ENCODE measurements at regions of chr13 and their contacts with region 1.

Region 1: DNA sequence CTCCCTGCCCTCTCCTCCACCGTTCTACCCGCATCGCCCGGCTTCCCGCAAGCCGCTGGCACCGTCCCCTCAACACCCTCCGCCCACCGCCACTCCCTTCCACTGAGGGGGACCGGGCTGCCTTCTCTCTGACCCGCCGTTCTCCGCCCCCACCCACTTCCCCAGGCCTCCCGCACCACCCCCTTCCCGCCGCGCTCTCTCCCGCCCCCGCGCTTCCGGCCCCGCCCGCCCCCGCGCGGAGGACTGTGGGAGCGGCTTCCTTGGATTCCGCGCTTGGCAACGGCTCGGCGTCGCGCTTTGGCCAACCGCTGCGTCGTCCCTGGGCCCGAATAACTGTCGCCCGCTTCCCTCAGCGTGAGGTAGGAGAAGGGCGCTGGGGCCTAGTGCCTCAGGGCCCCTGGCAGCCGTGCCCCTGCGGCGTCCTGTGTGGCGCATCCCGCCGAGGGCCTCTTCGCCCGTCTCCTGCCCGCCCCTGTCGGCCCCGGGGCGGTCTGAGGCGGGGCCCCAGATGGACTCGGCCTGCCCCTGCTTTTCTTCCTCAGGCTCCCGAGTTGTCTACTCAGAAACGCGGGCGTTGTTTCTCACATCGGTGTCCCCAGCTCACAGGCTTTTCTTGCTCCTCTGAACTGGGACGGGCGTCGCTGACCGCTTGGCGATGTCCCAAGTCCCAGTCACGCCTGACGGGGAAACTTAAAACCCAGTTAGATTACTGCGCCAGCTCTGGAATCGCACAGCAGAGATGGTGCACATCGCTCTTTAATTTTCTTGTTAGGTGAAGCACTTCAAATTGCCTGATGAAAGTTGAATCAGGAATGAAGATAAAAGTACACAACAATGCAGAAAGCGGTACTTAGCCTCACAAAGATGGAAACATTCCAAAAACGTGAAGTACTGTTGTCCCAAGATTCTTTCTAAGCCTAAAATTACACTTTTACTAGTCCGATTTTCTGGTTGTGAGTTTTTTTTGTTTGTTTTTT is at the start of gene IFT88:
- DNase-seq: peak; percentile 89
- ATAC-seq: peak; percentile 80
- H3K4me3 ChIP-seq: peak within 1 kb of the TSS; percentile 77
- H3K27ac ChIP-seq: peak within 1 kb of the TSS; percentile 87
- H3K4me1 ChIP-seq: peaks cover 13% of the 10 kb centered on the region
- H3K27me3 ChIP-seq: no peaks in the 10 kb centered on the region
- CTCF ChIP-seq: no peak
- total RNA-seq, gene IFT88: 11.9 and 12.6 TPM in 2 replicates

Region 2: GRCh38 chr13:20411638-20412360 is 155.4 kb before region 1 on chr13:
- CTCF ChIA-PET with region 1: no interaction called
- POLR2A ChIA-PET with region 1: no interaction called
- intact Hi-C with region 1: no loop called
- DNase-seq: no peak
- ATAC-seq: no peak
- H3K4me3 ChIP-seq: no peak overlapping the region
- H3K27ac ChIP-seq: no peak overlapping the region
- H3K4me1 ChIP-seq: peaks cover 6% of the 10 kb centered on the region; the same call in 1 of the 2 replicates
- H3K27me3 ChIP-seq: no peaks in the 10 kb centered on the region
- CTCF ChIP-seq: no peak

Region 3: DNA sequence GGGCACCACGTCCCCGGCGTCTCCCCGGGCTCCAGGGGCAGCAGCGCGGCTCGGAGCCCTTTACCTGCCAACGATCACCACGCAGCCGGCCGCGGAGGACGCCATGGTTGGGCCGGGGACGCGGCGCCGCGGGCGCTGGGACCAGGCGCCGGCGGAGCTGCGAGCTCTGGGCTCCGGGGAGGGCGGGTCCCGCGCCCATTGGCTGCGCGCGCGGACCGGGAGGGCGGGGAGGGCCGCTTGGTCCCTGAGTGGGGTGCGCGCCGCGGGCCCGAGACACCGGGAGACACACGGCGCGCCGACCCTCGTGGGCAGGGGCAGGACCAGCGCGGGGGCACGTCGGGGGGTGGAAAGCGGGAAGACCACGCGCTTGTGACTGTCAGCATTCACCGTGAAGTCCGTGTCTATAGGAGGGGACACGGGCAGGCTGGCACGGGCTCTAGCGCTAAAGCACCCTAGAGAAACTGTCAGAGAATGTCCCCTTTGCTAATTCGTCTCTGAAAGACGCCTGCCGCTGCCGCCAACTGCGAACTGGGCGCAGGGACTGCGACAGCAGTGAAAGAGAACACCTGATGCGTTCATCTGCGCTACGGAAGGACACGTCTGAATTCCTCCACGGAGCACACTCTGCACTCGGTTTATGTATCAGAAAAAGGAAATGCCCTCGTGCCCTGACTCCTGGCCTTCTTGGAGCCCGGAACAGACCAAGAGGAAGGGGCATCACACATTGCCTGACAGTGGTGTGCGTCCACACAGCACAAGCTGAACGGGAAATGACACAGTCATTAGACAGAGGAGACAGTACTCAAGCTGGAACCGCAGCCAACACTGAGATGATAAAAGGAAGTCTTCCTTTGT is 41.3 kb before region 1 on chr13 and contains the start of gene CRYL1:
- CTCF ChIA-PET with region 1: no interaction called
- POLR2A ChIA-PET with region 1: no interaction called
- intact Hi-C with region 1: loop called (anchors 1 kb)
- DNase-seq: peak; percentile 83
- ATAC-seq: peak; percentile 91
- H3K4me3 ChIP-seq: peak within 1 kb of the TSS; percentile 94
- H3K27ac ChIP-seq: peak within 1 kb of the TSS; percentile 73
- H3K4me1 ChIP-seq: peaks cover 13% of the 10 kb centered on the region
- H3K27me3 ChIP-seq: no peaks in the 10 kb centered on the region
- CTCF ChIP-seq: no peak
- total RNA-seq, gene CRYL1: 13.6 and 20.8 TPM in 2 replicates

Region 4: GRCh38 chr13:20582026-20582425 is 14.8 kb after region 1 on chr13:
- CTCF ChIA-PET with region 1: no interaction called
- POLR2A ChIA-PET with region 1: no interaction called
- intact Hi-C with region 1: no loop called
- DNase-seq: no peak
- ATAC-seq: no peak
- H3K4me3 ChIP-seq: no peak overlapping the region
- H3K27ac ChIP-seq: no peak overlapping the region
- H3K4me1 ChIP-seq: no peaks in the 10 kb centered on the region
- H3K27me3 ChIP-seq: no peaks in the 10 kb centered on the region
- CTCF ChIP-seq: no peak

Region 5: DNA sequence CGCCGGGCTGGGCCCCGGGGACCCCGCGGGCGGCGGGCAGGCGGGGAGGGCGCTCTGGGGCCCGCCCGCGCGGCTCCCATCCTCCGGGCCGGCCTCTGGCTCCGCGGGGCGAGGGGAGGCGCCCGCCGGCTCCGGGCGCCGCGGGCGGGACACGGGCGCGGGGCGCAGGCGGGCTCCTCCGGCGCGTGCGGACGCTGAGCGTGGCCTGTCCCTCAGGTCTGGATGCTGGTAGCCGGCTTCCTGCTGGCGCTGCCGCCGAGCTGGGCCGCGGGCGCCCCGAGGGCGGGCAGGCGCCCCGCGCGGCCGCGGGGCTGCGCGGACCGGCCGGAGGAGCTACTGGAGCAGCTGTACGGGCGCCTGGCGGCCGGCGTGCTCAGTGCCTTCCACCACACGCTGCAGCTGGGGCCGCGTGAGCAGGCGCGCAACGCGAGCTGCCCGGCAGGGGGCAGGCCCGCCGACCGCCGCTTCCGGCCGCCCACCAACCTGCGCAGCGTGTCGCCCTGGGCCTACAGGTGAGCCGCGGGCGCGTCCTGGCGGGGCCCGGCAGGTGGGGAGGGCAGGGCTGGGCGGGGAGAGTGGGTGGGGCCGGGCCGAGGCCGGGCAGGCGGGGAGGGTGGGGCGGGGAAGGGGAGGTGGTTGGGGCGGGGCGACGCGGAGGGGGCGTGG is 136.7 kb after region 1 on chr13:
- CTCF ChIA-PET with region 1: no interaction called
- POLR2A ChIA-PET with region 1: no interaction called
- intact Hi-C with region 1: loop called (anchors 5 kb)
- DNase-seq: peak; percentile 94
- ATAC-seq: peak; percentile 84
- H3K4me3 ChIP-seq: peak overlapping the region; percentile 40; the same call in 1 of the 2 replicates
- H3K27ac ChIP-seq: no peak overlapping the region
- H3K4me1 ChIP-seq: peaks cover 25% of the 10 kb centered on the region
- H3K27me3 ChIP-seq: no peaks in the 10 kb centered on the region
- CTCF ChIP-seq: peak; percentile 26; the same call in 1 of the 2 replicates

Region 6: GRCh38 chr13:20738616-20739015 is 171.4 kb after region 1 on chr13:
- CTCF ChIA-PET with region 1: no interaction called
- POLR2A ChIA-PET with region 1: no interaction called
- intact Hi-C with region 1: no loop called
- DNase-seq: no peak
- ATAC-seq: no peak
- H3K4me3 ChIP-seq: no peak overlapping the region
- H3K27ac ChIP-seq: no peak overlapping the region
- H3K4me1 ChIP-seq: no peaks in the 10 kb centered on the region
- H3K27me3 ChIP-seq: no peaks in the 10 kb centered on the region
- CTCF ChIP-seq: no peak

Region 7: GRCh38 chr13:20796791-20797508 is 229.8 kb after region 1 on chr13:
- CTCF ChIA-PET with region 1: interaction called, 4 read pairs
- POLR2A ChIA-PET with region 1: interaction called, 19 read pairs
- intact Hi-C with region 1: no loop called
- DNase-seq: peak; percentile 31
- ATAC-seq: peak; percentile 66
- H3K4me3 ChIP-seq: no peak overlapping the region
- H3K27ac ChIP-seq: no peak overlapping the region
- H3K4me1 ChIP-seq: peaks cover 18% of the 10 kb centered on the region; the same call in 1 of the 2 replicates
- H3K27me3 ChIP-seq: no peaks in the 10 kb centered on the region
- CTCF ChIP-seq: no peak

Measured in PC-3 (cell line).